CD8-positive, alpha-beta T cell (primary cell): ENCODE measurements at regions of chr9 and their contacts with region 1.

Region 1: GRCh38 chr9:87613265-87614111 is 112.4 kb upstream of the CTSL start:
- DNase-seq: no peak
- ATAC-seq: no peak
- H3K4me3 ChIP-seq: no peak overlapping the region
- H3K4me3 Mint-ChIP-seq: no peak overlapping the region
- H3K27ac ChIP-seq: no peak overlapping the region
- H3K27ac Mint-ChIP-seq: no peak overlapping the region
- H3K4me1 ChIP-seq: no peaks in the 10 kb centered on the region
- H3K4me1 Mint-ChIP-seq: no peaks in the 10 kb centered on the region
- H3K27me3 ChIP-seq: no peaks in the 10 kb centered on the region
- H3K27me3 Mint-ChIP-seq: no peaks in the 10 kb centered on the region
- CTCF ChIP-seq: no peak

Region 2: DNA sequence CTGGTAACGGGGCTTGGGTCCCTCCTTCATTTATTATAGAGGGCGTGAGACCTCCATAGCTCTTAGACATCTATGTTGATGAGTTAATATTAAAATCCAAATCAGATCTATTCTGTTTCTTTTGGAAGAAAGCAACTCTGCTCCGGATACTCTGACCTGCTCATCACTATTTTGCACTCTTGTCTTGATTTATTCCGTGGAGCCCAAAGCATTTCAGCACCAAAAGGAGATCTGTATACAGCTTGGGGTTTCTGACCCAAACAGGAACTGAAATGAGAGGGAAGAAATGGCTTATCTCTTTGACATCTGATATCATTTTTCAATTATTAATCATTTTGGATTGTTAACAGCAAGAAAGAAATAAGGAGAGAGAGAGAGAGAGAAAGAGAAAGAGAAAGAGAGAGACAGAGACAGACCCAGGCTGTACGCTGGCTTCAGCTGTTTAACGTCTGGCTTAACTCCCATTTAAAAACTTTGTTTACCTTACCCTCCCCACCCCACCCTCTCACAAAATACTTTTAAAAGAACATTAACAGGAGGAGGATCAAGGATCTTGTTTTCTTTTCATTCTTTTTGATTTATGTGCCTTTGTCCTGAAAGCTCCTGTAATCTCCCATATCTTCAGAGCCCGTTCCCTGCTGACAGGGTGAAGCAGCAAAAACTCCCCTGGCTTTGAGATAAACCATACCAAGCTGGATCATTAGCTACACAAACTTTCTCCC is 1027.9 kb before region 1 on chr9:
- CTCF ChIA-PET with region 1: no interaction called
- POLR2A ChIA-PET with region 1: no interaction called
- intact Hi-C with region 1: loop called in 1 of 2 experiments (anchors 5 kb)
- DNase-seq: no peak
- ATAC-seq: no peak
- H3K4me3 ChIP-seq: no peak overlapping the region
- H3K4me3 Mint-ChIP-seq: no peak overlapping the region
- H3K27ac ChIP-seq: no peak overlapping the region
- H3K27ac Mint-ChIP-seq: no peak overlapping the region
- H3K4me1 ChIP-seq: no peaks in the 10 kb centered on the region
- H3K4me1 Mint-ChIP-seq: no peaks in the 10 kb centered on the region
- H3K27me3 ChIP-seq: no peaks in the 10 kb centered on the region
- H3K27me3 Mint-ChIP-seq: peaks cover 13% of the 10 kb centered on the region
- CTCF ChIP-seq: no peak